ENCODE measurements at regions of chr16 and their contacts with region 1.

Region 1: GRCh38 chr16:56700195-56700594 is 17.9 kb downstream of the MT1X start:
- DNase-seq: no peak
- H3K4me3 Mint-ChIP-seq: no peak overlapping the region
- H3K27ac Mint-ChIP-seq: no peak overlapping the region
- H3K4me1 Mint-ChIP-seq: peaks cover 10% of the 10 kb centered on the region
- H3K27me3 Mint-ChIP-seq: peaks cover 26% of the 10 kb centered on the region

Region 2: GRCh38 chr16:56513972-56514371 is 186.2 kb before region 1 on chr16:
- CTCF ChIA-PET with region 1: interaction called, 15 read pairs
- DNase-seq: peak; percentile 70
- H3K4me3 Mint-ChIP-seq: no peak overlapping the region
- H3K27ac Mint-ChIP-seq: no peak overlapping the region
- H3K4me1 Mint-ChIP-seq: peaks cover 6% of the 10 kb centered on the region
- H3K27me3 Mint-ChIP-seq: no peaks in the 10 kb centered on the region

Region 3: GRCh38 chr16:56576585-56577293 is 123.5 kb before region 1 on chr16:
- CTCF ChIA-PET with region 1: interaction called, 79 read pairs
- DNase-seq: peak; percentile 91
- H3K4me3 Mint-ChIP-seq: no peak overlapping the region
- H3K27ac Mint-ChIP-seq: no peak overlapping the region
- H3K4me1 Mint-ChIP-seq: peaks cover 7% of the 10 kb centered on the region
- H3K27me3 Mint-ChIP-seq: peaks cover 33% of the 10 kb centered on the region

Region 4: GRCh38 chr16:56600398-56600999 is 99.7 kb before region 1 on chr16:
- CTCF ChIA-PET with region 1: interaction called, 34 read pairs
- DNase-seq: peak; percentile 55
- H3K4me3 Mint-ChIP-seq: no peak overlapping the region
- H3K27ac Mint-ChIP-seq: no peak overlapping the region
- H3K4me1 Mint-ChIP-seq: peaks cover 8% of the 10 kb centered on the region
- H3K27me3 Mint-ChIP-seq: peaks cover 54% of the 10 kb centered on the region

Region 5: GRCh38 chr16:56673921-56674320 is 26.3 kb before region 1 on chr16:
- CTCF ChIA-PET with region 1: interaction called, 31 read pairs
- DNase-seq: peak; percentile 56
- H3K4me3 Mint-ChIP-seq: peak overlapping the region; percentile 22
- H3K27ac Mint-ChIP-seq: no peak overlapping the region
- H3K4me1 Mint-ChIP-seq: peaks cover 44% of the 10 kb centered on the region
- H3K27me3 Mint-ChIP-seq: peaks cover 78% of the 10 kb centered on the region

Region 6: GRCh38 chr16:56776562-56776961 is 76.4 kb after region 1 on chr16:
- CTCF ChIA-PET with region 1: no interaction called
- DNase-seq: no peak
- H3K4me3 Mint-ChIP-seq: no peak overlapping the region
- H3K27ac Mint-ChIP-seq: no peak overlapping the region
- H3K4me1 Mint-ChIP-seq: peaks cover 30% of the 10 kb centered on the region
- H3K27me3 Mint-ChIP-seq: no peaks in the 10 kb centered on the region

Region 7: GRCh38 chr16:56866943-56867830 is 167.0 kb after region 1 on chr16:
- CTCF ChIA-PET with region 1: interaction called, 13 read pairs
- DNase-seq: peak; percentile 55
- H3K4me3 Mint-ChIP-seq: no peak overlapping the region
- H3K27ac Mint-ChIP-seq: no peak overlapping the region
- H3K4me1 Mint-ChIP-seq: peaks cover 18% of the 10 kb centered on the region
- H3K27me3 Mint-ChIP-seq: no peaks in the 10 kb centered on the region